Testis (tissue), 5 donors: ENCODE measurements at regions of chr16 and their contacts with region 1.

Region 1: GRCh38 chr16:1610276-1611017 is 1.4 kb downstream of the IFT140 start:
- DNase-seq: peak; percentile 86
- H3K4me3 ChIP-seq: peak overlapping the region; percentile 63 to 85
- H3K27ac ChIP-seq: peak overlapping the region; percentile 87 to 90
- H3K4me1 ChIP-seq: peaks cover 13% of the 10 kb centered on the region
- H3K27me3 ChIP-seq: no peaks in the 10 kb centered on the region
- CTCF ChIP-seq: no peak
- POLR2A ChIP-seq: no peak

Region 2: DNA sequence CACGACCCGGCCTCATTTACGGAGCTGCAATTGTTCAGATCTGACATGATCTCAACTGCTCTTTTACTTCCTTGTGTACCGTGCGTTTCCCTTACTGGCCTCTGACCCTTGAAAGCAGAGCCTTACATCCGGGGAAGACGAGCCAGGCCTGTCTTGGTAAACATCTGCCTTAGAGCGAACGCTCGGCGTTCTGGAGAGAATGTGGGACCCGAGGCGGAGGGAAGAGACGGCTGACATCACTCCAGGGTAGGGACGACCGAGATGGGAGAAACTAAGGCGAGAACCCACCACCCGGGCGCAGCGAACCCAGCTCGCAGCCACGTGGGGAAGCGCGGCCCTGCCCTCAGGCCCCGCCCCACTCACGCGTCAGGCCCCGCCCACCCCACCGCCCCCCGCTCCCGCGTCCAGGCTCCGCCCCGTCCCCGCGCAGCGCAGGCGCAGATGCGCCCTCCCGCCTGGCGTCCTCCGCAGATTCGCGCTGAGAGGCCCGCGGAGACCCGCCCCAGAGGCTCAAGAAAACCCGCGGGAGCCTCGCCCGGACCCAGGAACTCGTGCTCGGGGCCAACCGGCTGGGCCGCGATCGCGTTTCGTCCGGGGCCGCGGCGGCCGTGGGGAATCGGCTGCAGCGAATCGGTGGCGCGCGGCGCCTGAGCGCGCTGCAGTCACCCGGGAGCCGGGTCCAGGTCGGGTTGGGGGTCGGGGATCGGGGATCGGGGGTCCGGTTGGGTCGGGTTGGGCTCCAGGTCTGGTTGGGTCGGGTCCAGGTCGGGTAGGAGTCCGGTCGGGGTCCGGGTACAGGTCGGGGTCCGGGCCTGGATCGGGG is 117.3 kb before region 1 on chr16 and contains the start of gene TELO2:
- intact Hi-C with region 1: loop called (anchors 5 kb)
- DNase-seq: peak; percentile 84
- H3K4me3 ChIP-seq: peak within 1 kb of the TSS; percentile 69 to 91
- H3K27ac ChIP-seq: peak within 1 kb of the TSS; percentile 80 to 82
- H3K4me1 ChIP-seq: peaks cover 15% of the 10 kb centered on the region
- H3K27me3 ChIP-seq: no peaks in the 10 kb centered on the region
- CTCF ChIP-seq: peak in 1 of 3 experiments; percentile 21
- POLR2A ChIP-seq: no peak
- total RNA-seq, gene TELO2: 45.2 to 46.0 TPM

Region 3: GRCh38 chr16:1533443-1533951 is 77.0 kb before region 1 on chr16 and contains the start of gene TMEM204:
- intact Hi-C with region 1: loop called (anchors 10 kb)
- DNase-seq: peak; percentile 65
- H3K4me3 ChIP-seq: peak within 1 kb of the TSS; percentile 57 to 72
- H3K27ac ChIP-seq: peak within 1 kb of the TSS; percentile 88 to 90
- H3K4me1 ChIP-seq: peaks cover 51% of the 10 kb centered on the region
- H3K27me3 ChIP-seq: no peaks in the 10 kb centered on the region
- CTCF ChIP-seq: no peak
- POLR2A ChIP-seq: no peak
- total RNA-seq, gene TMEM204: 19.4 to 21.4 TPM